HEK293T (cell line): ENCODE measurements at regions of chr10 and their contacts with region 1.

Region 1: GRCh38 chr10:94320285-94320914 is 42.3 kb downstream of the NOC3L start:
- DNase-seq: peak; percentile 69

Region 2: GRCh38 chr10:93916257-93917063 is 403.9 kb before region 1 on chr10:
- CTCF ChIA-PET with region 1: interaction called, 34 read pairs
- POLR2A ChIA-PET with region 1: no interaction called
- DNase-seq: peak; percentile 49

Region 3: GRCh38 chr10:94310369-94310768 is 10.0 kb before region 1 on chr10:
- CTCF ChIA-PET with region 1: interaction called, 10 read pairs
- POLR2A ChIA-PET with region 1: no interaction called
- DNase-seq: no peak

Region 4: DNA sequence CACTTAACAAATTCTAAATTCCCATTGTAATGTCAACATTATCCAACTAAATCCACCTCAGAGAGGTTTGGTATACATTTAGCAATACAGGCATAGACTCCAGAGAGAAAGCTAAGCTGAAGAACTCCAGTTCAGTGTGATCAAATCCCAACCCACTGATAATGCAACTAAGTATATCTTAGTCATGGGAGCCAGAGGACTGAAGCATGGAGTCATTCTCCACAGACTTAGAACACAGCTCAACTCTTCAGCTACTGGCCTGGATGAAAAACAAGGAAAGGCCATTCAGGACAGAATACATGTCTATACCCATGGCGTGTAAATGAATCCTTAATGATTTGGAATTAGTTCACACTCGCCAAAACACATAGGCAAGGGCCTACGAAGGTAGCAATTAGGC is 14.5 kb after region 1 on chr10:
- CTCF ChIA-PET with region 1: interaction called, 20 read pairs
- POLR2A ChIA-PET with region 1: no interaction called
- DNase-seq: no peak

Region 5: GRCh38 chr10:94443549-94443948 is 123.1 kb after region 1 on chr10:
- CTCF ChIA-PET with region 1: interaction called, 11 read pairs
- POLR2A ChIA-PET with region 1: no interaction called
- DNase-seq: no peak